GM12878 (cell line): ENCODE measurements at regions of chr20 and their contacts with region 1.

Region 1: GRCh38 chr20:17003170-17003870 is 223.5 kb upstream of the PCSK2 start:
- DNase-seq: no peak
- ATAC-seq: no peak
- H3K4me3 ChIP-seq: no peak overlapping the region
- H3K27ac ChIP-seq: no peak overlapping the region
- H3K4me1 ChIP-seq: no peaks in the 10 kb centered on the region
- H3K27me3 ChIP-seq: no peaks in the 10 kb centered on the region
- CTCF ChIP-seq: no peak
- EP300 ChIP-seq: no peak
- POLR2A ChIP-seq: no peak
- RAD21 ChIP-seq: no peak

Region 2: DNA sequence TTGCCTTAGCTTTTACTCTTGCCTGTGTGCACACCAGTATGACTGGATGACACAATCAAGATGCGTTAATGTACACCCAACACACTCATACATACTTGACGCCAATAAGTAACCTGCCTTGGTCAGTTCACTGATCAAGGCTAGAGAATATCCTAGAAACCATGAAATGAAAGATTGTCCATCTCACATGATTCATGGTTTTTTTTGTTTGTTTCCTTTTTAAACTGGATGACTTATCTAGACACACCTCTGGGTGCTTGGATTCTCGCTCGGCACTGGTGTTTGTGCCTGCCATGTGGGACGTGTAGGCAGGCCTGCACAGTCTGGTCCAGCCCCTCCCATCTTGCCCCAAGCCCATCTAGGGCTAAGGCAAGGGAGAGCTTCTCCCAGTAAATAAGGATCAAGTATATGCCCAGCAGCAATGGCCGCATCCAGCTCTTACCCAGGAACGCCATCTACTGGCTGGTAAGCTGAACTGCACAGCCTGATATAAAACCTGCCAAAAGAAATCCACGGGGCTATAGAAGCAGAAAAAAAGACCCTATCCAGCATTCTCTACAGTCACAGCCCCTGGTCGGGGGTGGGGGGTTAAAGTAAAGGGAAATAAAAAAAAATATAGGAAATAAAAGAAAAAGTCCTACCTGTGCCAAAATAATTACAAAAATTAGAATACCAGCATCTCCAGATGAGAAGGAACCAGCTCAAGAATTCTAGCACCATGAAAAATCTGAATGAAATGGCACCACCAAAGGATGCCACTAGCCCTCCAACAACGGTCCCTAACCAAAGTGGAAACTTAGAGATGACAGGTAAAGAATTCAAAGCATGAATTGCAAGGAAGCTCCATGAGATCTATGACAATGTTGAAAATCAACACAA is 181.9 kb before region 1 on chr20:
- CTCF ChIA-PET with region 1: no interaction called
- POLR2A ChIA-PET with region 1: no interaction called
- RAD21 ChIA-PET with region 1: no interaction called
- SMC1A ChIA-PET with region 1: no interaction called
- in situ Hi-C with region 1: no loop called
- intact Hi-C with region 1: no loop called
- DNase-seq: no peak
- ATAC-seq: peak; percentile 78
- H3K4me3 ChIP-seq: no peak overlapping the region
- H3K27ac ChIP-seq: no peak overlapping the region
- H3K4me1 ChIP-seq: no peaks in the 10 kb centered on the region
- H3K27me3 ChIP-seq: no peaks in the 10 kb centered on the region
- CTCF ChIP-seq: peak; percentile 74 to 95 (median 90)
- EP300 ChIP-seq: no peak
- POLR2A ChIP-seq: no peak
- RAD21 ChIP-seq: peak; percentile 59

Region 3: DNA sequence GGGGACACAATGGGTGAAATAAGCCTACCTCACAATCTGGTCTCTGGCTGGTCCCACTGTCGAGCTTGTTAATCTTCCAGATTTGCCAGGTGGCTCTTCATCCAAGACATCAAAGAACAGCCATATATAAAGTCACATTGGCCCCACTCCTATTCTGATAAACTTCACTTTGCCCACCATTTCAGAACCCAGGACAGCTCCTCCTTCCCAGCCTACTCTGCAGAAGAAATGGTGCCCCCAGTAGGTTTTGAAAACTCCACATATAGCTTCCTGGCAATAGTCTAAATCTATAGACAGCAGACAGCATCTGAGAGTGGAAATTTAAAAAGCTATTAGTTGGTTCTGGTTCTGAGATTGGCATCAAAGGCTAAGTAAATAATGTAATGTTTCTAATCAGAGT is 80.4 kb after region 1 on chr20:
- CTCF ChIA-PET with region 1: no interaction called
- POLR2A ChIA-PET with region 1: no interaction called
- RAD21 ChIA-PET with region 1: no interaction called
- SMC1A ChIA-PET with region 1: no interaction called
- in situ Hi-C with region 1: no loop called
- intact Hi-C with region 1: loop called (anchors 10 kb)
- DNase-seq: no peak
- ATAC-seq: no peak
- H3K4me3 ChIP-seq: no peak overlapping the region
- H3K27ac ChIP-seq: no peak overlapping the region
- H3K4me1 ChIP-seq: no peaks in the 10 kb centered on the region
- H3K27me3 ChIP-seq: no peaks in the 10 kb centered on the region
- CTCF ChIP-seq: no peak
- EP300 ChIP-seq: no peak
- POLR2A ChIP-seq: no peak
- RAD21 ChIP-seq: no peak